Sigmoid colon (tissue), 7 donors: ENCODE measurements at regions of chr5 and their contacts with region 1.

Region 1: GRCh38 chr5:55344392-55344992 is 36.7 kb downstream of the MTREX start:
- DNase-seq: peak; percentile 69
- H3K4me3 ChIP-seq: no peak overlapping the region
- H3K27ac ChIP-seq: peak overlapping the region in 3 of 4 donors; percentile 13 to 36 (median 17)
- H3K4me1 ChIP-seq: peaks cover 0 to 26% (median 16%) of the 10 kb centered on the region in 4 donors
- H3K27me3 ChIP-seq: no peaks in the 10 kb centered on the region
- CTCF ChIP-seq: peak in 3 of 4 experiments; percentile 86 to 90 (median 88)
- EP300 ChIP-seq: no peak
- POLR2A ChIP-seq: no peak

Region 2: GRCh38 chr5:53917095-53917494 is 1427.4 kb before region 1 on chr5:
- intact Hi-C with region 1: no loop called
- DNase-seq: no peak
- H3K4me3 ChIP-seq: no peak overlapping the region
- H3K27ac ChIP-seq: no peak overlapping the region
- H3K4me1 ChIP-seq: no peaks in the 10 kb centered on the region
- H3K27me3 ChIP-seq: no peaks in the 10 kb centered on the region
- CTCF ChIP-seq: no peak
- EP300 ChIP-seq: no peak
- POLR2A ChIP-seq: no peak

Region 3: GRCh38 chr5:55387874-55388273 is 43.4 kb after region 1 on chr5:
- intact Hi-C with region 1: loop called (anchors 5 kb)
- DNase-seq: no peak
- H3K4me3 ChIP-seq: no peak overlapping the region
- H3K27ac ChIP-seq: no peak overlapping the region
- H3K4me1 ChIP-seq: no peaks in the 10 kb centered on the region
- H3K27me3 ChIP-seq: no peaks in the 10 kb centered on the region
- CTCF ChIP-seq: no peak
- EP300 ChIP-seq: no peak
- POLR2A ChIP-seq: no peak

Region 4: GRCh38 chr5:55429613-55430253 is 85.2 kb after region 1 on chr5:
- intact Hi-C with region 1: no loop called
- DNase-seq: no peak
- H3K4me3 ChIP-seq: no peak overlapping the region
- H3K27ac ChIP-seq: peak overlapping the region in 3 of 4 donors; percentile 38 to 51 (median 47)
- H3K4me1 ChIP-seq: peaks cover 0 to 53% (median 38%) of the 10 kb centered on the region in 4 donors
- H3K27me3 ChIP-seq: no peaks in the 10 kb centered on the region
- CTCF ChIP-seq: no peak
- EP300 ChIP-seq: no peak
- POLR2A ChIP-seq: no peak

Region 5: DNA sequence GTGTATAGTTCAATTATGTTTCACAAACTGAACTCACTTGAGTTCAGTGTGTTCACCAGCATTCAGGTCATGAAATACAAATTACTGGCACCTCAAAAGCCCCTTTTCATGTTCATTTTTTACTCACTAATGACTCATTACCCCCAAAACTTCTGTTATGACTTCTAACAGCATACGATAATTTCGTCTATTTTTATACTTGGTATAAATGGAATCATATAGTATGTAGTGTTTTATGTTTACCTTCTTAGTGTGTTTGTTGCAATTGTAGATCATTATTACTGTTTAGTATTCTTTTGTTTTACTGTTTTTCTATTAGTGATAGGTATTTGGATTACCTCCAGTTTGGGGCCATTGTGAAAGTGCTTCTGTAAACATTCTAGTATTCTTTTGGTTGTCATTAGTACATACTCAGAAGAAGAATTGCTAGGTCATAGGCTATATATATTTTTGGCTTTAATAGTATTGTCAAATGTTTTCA is 426.7 kb after region 1 on chr5:
- intact Hi-C with region 1: no loop called
- DNase-seq: no peak
- H3K4me3 ChIP-seq: no peak overlapping the region
- H3K27ac ChIP-seq: no peak overlapping the region
- H3K4me1 ChIP-seq: no peaks in the 10 kb centered on the region
- H3K27me3 ChIP-seq: peaks cover 0 to 5% (median 0%) of the 10 kb centered on the region in 3 donors
- CTCF ChIP-seq: no peak
- EP300 ChIP-seq: no peak
- POLR2A ChIP-seq: no peak